CD4-positive, alpha-beta memory T cell (primary cell): ENCODE measurements at regions of chr9 and their contacts with region 1.

Region 1: GRCh38 chr9:89597711-89598625 is 6.8 kb upstream of the GADD45G start:
- DNase-seq: peak; percentile 50 to 58 (median 52)
- H3K4me3 ChIP-seq: no peak overlapping the region
- H3K4me3 Mint-ChIP-seq: no peak overlapping the region
- H3K27ac ChIP-seq: no peak overlapping the region
- H3K27ac Mint-ChIP-seq: no peak overlapping the region
- H3K4me1 ChIP-seq: no peaks in the 10 kb centered on the region
- H3K4me1 Mint-ChIP-seq: peaks cover 0 to 2% (median under 1%) of the 10 kb centered on the region in 4 donors
- H3K27me3 ChIP-seq: no peaks in the 10 kb centered on the region
- H3K27me3 Mint-ChIP-seq: peaks cover 2 to 6% of the 10 kb centered on the region in 2 donors

Region 2: DNA sequence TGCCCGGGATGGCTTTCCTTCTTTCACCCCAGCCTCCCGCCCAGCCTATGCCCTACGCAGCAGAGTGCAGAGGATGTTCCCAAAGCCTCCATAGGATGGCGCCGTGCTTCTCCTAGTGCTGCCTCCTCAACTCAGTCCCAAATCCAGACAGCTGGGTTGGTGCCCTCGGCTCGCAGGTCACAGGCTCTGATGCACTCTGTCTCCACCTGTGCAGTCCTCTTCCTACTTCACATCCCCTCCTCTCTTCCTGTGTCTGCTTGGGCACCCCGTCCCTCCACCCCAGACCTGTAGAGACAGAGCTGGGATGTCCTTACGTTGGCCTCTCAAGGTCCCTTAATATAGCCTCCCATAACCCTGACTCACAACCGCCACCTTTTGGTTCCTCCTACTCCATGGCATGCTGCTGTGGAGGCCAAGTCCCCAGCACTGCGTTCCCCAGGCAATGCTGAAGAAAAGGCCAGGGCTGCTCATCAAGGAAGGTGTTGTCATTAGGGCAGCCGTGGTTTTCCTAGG is 321.3 kb after region 1 on chr9:
- CTCF ChIA-PET with region 1: interaction called, 107 read pairs
- POLR2A ChIA-PET with region 1: interaction called, 5 read pairs
- intact Hi-C with region 1: loop called (anchors 1 kb)
- DNase-seq: peak in 4 of 5 donors; percentile 8 to 32 (median 22)
- H3K4me3 ChIP-seq: no peak overlapping the region
- H3K4me3 Mint-ChIP-seq: no peak overlapping the region
- H3K27ac ChIP-seq: no peak overlapping the region
- H3K27ac Mint-ChIP-seq: no peak overlapping the region
- H3K4me1 ChIP-seq: no peaks in the 10 kb centered on the region
- H3K4me1 Mint-ChIP-seq: peaks cover 4 to 13% (median 7%) of the 10 kb centered on the region in 4 donors
- H3K27me3 ChIP-seq: no peaks in the 10 kb centered on the region
- H3K27me3 Mint-ChIP-seq: peaks cover 2 to 8% of the 10 kb centered on the region in 2 donors

Region 3: DNA sequence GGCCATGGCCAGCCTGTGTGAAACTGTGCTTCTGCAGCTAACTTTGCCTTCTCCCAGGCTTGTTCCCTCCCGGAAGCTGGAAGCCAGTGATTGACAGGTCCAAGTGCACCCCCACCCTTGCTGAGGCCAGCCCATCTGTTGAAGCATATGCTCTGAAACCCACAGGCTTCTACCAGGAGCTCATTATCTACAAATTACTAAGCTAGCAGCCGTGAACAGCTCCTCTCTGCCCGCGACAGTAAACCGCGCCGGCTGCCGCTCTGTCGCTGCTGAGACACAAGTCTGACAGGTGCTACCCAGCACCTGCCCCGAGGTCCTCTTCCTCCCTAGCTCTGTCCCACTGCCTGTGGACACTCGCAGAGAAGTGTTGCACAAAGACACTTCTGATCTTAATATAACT is 497.7 kb after region 1 on chr9:
- CTCF ChIA-PET with region 1: interaction called, 54 read pairs
- POLR2A ChIA-PET with region 1: interaction called, 3 read pairs
- intact Hi-C with region 1: no loop called
- DNase-seq: no peak
- H3K4me3 ChIP-seq: no peak overlapping the region
- H3K4me3 Mint-ChIP-seq: no peak overlapping the region
- H3K27ac ChIP-seq: no peak overlapping the region
- H3K27ac Mint-ChIP-seq: no peak overlapping the region
- H3K4me1 ChIP-seq: peaks cover 12% of the 10 kb centered on the region
- H3K4me1 Mint-ChIP-seq: peaks cover 12 to 15% (median 15%) of the 10 kb centered on the region in 4 donors
- H3K27me3 ChIP-seq: no peaks in the 10 kb centered on the region
- H3K27me3 Mint-ChIP-seq: peaks cover 2 to 4% of the 10 kb centered on the region in 2 donors

Region 4: GRCh38 chr9:90102292-90102901 is 504.4 kb after region 1 on chr9:
- CTCF ChIA-PET with region 1: interaction called, 94 read pairs
- POLR2A ChIA-PET with region 1: interaction called, 8 read pairs
- intact Hi-C with region 1: loop called (anchors 1 kb)
- DNase-seq: peak; percentile 74 to 83 (median 79)
- H3K4me3 ChIP-seq: no peak overlapping the region
- H3K4me3 Mint-ChIP-seq: no peak overlapping the region
- H3K27ac ChIP-seq: no peak overlapping the region
- H3K27ac Mint-ChIP-seq: peak overlapping the region in 3 of 7 donors; percentile 28 to 53 (median 41)
- H3K4me1 ChIP-seq: no peaks in the 10 kb centered on the region
- H3K4me1 Mint-ChIP-seq: peaks cover 0 to 6% (median 3%) of the 10 kb centered on the region in 4 donors
- H3K27me3 ChIP-seq: no peaks in the 10 kb centered on the region
- H3K27me3 Mint-ChIP-seq: peaks cover 0 to 4% of the 10 kb centered on the region in 2 donors

Region 5: DNA sequence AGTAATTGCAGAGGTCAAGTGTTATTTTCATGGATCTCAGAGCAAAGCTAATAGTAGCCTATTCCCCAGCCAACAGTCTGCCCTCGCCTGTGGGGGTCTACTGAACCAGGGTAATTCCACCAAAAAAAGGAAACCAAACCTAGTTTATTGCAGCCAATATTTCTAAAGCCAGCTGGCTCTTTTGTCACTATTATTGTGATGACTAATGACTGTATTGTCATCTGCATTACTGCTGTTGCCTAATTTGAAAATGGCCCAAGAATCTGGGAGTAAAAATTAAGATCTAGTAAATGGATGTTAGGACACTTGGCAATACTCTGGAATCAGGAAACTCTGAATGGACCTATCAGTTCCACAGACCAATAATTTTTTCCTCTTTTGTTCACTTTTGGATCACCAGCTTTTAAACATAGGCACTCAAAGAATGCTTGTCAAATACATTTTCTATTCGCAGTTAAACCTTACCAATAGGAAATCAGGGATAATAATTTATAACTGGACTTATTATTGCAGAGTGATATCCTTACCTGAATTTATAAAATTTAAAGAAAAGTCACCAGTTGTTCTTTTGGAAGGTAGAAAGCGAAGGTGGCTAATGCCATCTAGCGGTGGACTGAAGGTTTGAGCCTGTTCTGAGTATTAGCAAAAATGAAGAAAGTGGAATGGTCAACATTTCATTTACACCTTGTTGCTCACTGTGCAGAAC is 1272.8 kb after region 1 on chr9:
- CTCF ChIA-PET with region 1: interaction called, 29 read pairs
- POLR2A ChIA-PET with region 1: no interaction called
- intact Hi-C with region 1: loop called (anchors 1 kb)
- DNase-seq: peak in 4 of 5 donors; percentile 37 to 42 (median 40)
- H3K4me3 ChIP-seq: no peak overlapping the region
- H3K4me3 Mint-ChIP-seq: no peak overlapping the region
- H3K27ac ChIP-seq: no peak overlapping the region
- H3K27ac Mint-ChIP-seq: no peak overlapping the region
- H3K4me1 ChIP-seq: no peaks in the 10 kb centered on the region
- H3K4me1 Mint-ChIP-seq: peaks cover 0 to 7% (median 0%) of the 10 kb centered on the region in 4 donors
- H3K27me3 ChIP-seq: no peaks in the 10 kb centered on the region
- H3K27me3 Mint-ChIP-seq: peaks cover 7% of the 10 kb centered on the region in 2 donors